ENCODE measurements at regions of chr2 and their contacts with region 1.

Region 1: DNA sequence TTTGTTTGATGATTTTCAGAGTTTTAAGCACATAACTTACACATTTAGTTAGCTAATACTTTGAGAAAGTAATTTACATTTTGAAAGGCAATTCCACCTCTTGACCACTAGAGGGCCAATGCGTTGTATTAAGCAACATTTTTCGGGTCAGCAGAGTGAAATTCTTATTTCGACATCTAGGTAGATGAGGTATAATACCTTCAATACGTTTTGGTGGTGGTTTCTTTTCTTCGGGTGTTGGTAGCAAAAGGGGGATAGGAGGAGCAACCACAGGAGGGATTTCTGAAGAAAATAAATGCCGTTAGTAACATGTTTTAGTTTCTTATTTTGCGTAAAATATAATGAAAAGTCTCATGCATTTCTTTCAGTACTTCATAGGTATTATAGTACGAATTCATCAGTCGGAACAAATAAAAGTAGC is 106.3 kb downstream of the TTN start:
- DNase-seq: no peak
- ATAC-seq: no peak
- H3K4me3 Mint-ChIP-seq: no peak overlapping the region
- H3K27ac Mint-ChIP-seq: no peak overlapping the region
- H3K4me1 Mint-ChIP-seq: no peaks in the 10 kb centered on the region
- H3K27me3 Mint-ChIP-seq: no peaks in the 10 kb centered on the region

Region 2: GRCh38 chr2:178258916-178259315 is 442.0 kb before region 1 on chr2:
- CTCF ChIA-PET with region 1: no interaction called
- POLR2A ChIA-PET with region 1: no interaction called
- DNase-seq: no peak
- ATAC-seq: no peak
- H3K4me3 Mint-ChIP-seq: no peak overlapping the region
- H3K27ac Mint-ChIP-seq: no peak overlapping the region
- H3K4me1 Mint-ChIP-seq: no peaks in the 10 kb centered on the region
- H3K27me3 Mint-ChIP-seq: peaks cover 12% of the 10 kb centered on the region

Region 3: DNA sequence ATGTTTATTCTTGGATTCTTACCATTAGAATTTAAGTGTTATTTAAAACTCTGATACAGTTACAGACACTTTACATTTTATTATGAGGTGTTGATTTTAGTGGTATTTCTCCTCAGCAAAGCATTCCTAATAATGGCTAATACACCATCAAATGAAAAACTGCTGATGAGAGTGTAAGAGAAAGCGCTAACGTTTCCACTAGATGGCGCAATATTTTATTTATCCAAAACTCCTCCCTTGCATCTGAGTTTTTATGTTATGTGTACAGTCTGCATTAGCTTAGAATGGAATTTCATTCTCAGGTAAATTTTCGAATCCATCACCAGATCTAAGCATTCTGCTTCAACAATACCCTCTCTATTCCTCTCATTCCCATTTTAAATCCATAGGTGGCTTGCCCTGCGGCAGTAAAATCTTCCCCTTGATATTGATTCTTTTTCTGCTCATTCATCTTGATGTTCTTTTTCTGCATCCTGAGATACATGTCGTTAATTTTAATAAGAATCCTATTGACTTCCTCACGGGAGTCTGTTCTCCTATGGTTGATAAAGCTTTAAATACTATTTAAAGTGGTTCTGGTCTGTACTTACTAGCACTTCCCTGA is 303.8 kb before region 1 on chr2:
- CTCF ChIA-PET with region 1: no interaction called
- POLR2A ChIA-PET with region 1: no interaction called
- DNase-seq: no peak
- ATAC-seq: peak; percentile 79
- H3K4me3 Mint-ChIP-seq: no peak overlapping the region
- H3K27ac Mint-ChIP-seq: no peak overlapping the region
- H3K4me1 Mint-ChIP-seq: peaks cover 4% of the 10 kb centered on the region
- H3K27me3 Mint-ChIP-seq: peaks cover 34% of the 10 kb centered on the region

Region 4: GRCh38 chr2:178689808-178690207 is 11.1 kb before region 1 on chr2:
- CTCF ChIA-PET with region 1: interaction called, 27 read pairs
- POLR2A ChIA-PET with region 1: no interaction called
- DNase-seq: no peak
- ATAC-seq: no peak
- H3K4me3 Mint-ChIP-seq: no peak overlapping the region
- H3K27ac Mint-ChIP-seq: no peak overlapping the region
- H3K4me1 Mint-ChIP-seq: no peaks in the 10 kb centered on the region
- H3K27me3 Mint-ChIP-seq: no peaks in the 10 kb centered on the region

Region 5: DNA sequence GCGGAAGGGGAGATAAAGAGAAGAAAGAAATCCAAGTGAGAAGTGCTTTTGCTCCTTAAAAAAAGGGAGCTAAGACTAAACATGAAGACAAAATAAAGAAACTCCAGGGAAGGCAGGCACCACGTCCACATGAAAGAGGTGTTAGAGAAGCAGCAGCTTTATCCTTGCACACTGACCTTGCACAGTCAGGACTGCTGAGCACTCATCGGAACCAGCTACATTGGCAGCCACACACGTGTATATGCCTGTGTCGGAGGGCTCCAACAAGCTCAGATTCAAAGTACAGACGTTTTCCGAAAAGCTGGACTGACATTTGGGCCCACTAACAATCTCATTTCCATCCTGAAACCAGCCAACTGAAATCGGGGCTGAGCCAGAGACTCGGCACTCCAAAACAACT is 18.1 kb after region 1 on chr2:
- CTCF ChIA-PET with region 1: interaction called, 15 read pairs
- POLR2A ChIA-PET with region 1: no interaction called
- DNase-seq: no peak
- ATAC-seq: no peak
- H3K4me3 Mint-ChIP-seq: no peak overlapping the region
- H3K27ac Mint-ChIP-seq: no peak overlapping the region
- H3K4me1 Mint-ChIP-seq: no peaks in the 10 kb centered on the region
- H3K27me3 Mint-ChIP-seq: no peaks in the 10 kb centered on the region

Region 6: GRCh38 chr2:179082697-179083096 is 381.8 kb after region 1 on chr2:
- CTCF ChIA-PET with region 1: no interaction called
- POLR2A ChIA-PET with region 1: no interaction called
- DNase-seq: no peak
- ATAC-seq: no peak
- H3K4me3 Mint-ChIP-seq: no peak overlapping the region
- H3K27ac Mint-ChIP-seq: no peak overlapping the region
- H3K4me1 Mint-ChIP-seq: no peaks in the 10 kb centered on the region
- H3K27me3 Mint-ChIP-seq: no peaks in the 10 kb centered on the region